ENCODE measurements at regions of chr10 and their contacts with region 1.

Region 1: GRCh38 chr10:92886334-92886961 is 38.1 kb downstream of the EXOC6 start:
- DNase-seq: no peak
- H3K4me3 ChIP-seq: no peak overlapping the region
- H3K27ac ChIP-seq: no peak overlapping the region
- H3K4me1 ChIP-seq: no peaks in the 10 kb centered on the region
- H3K27me3 ChIP-seq: no peaks in the 10 kb centered on the region
- CTCF ChIP-seq: no peak
- EP300 ChIP-seq: no peak
- RAD21 ChIP-seq: no peak

Region 2: GRCh38 chr10:92640110-92640509 is 246.3 kb before region 1 on chr10:
- CTCF ChIA-PET with region 1: no interaction called
- POLR2A ChIA-PET with region 1: no interaction called
- DNase-seq: no peak
- H3K4me3 ChIP-seq: no peak overlapping the region
- H3K27ac ChIP-seq: no peak overlapping the region
- H3K4me1 ChIP-seq: peaks cover 0 to 5% of the 10 kb centered on the region in 2 experiments; a peak in 1 of 4 replicates
- H3K27me3 ChIP-seq: no peaks in the 10 kb centered on the region
- CTCF ChIP-seq: peak; percentile 14
- EP300 ChIP-seq: no peak
- RAD21 ChIP-seq: no peak

Region 3: GRCh38 chr10:93074147-93074596 is 187.7 kb after region 1 on chr10:
- CTCF ChIA-PET with region 1: interaction called, 18 read pairs
- POLR2A ChIA-PET with region 1: no interaction called
- DNase-seq: peak; percentile 71
- H3K4me3 ChIP-seq: peak overlapping the region; percentile 46 to 52
- H3K27ac ChIP-seq: no peak overlapping the region
- H3K4me1 ChIP-seq: peaks cover 0 to 37% of the 10 kb centered on the region in 2 experiments; a peak in 1 of 4 replicates
- H3K27me3 ChIP-seq: peaks cover 45% of the 10 kb centered on the region
- CTCF ChIP-seq: no peak; the same call in 1 of the 2 replicates
- EP300 ChIP-seq: no peak
- RAD21 ChIP-seq: no peak

Region 4: GRCh38 chr10:93458821-93459257 is 572.4 kb after region 1 on chr10:
- CTCF ChIA-PET with region 1: no interaction called
- POLR2A ChIA-PET with region 1: no interaction called
- DNase-seq: no peak
- H3K4me3 ChIP-seq: no peak overlapping the region
- H3K27ac ChIP-seq: peak overlapping the region; percentile 86 to 99
- H3K4me1 ChIP-seq: peaks cover 7 to 56% of the 10 kb centered on the region in 2 experiments; a peak in 3 of 4 replicates
- H3K27me3 ChIP-seq: no peaks in the 10 kb centered on the region
- CTCF ChIP-seq: no peak
- EP300 ChIP-seq: peak; percentile 36 to 94; a peak in 3 of 4 replicates
- RAD21 ChIP-seq: no peak

Measured in SK-N-SH (cell line).